ENCODE measurements at regions of chr10 and their contacts with region 1.

Region 1: GRCh38 chr10:117167789-117168674 is 29.3 kb upstream of the KCNK18 start:
- DNase-seq: peak; percentile 55 to 81
- H3K4me3 ChIP-seq: peak overlapping the region; percentile 21; the same call in 1 of the 2 replicates
- H3K4me3 Mint-ChIP-seq: peak overlapping the region; percentile 55
- H3K27ac Mint-ChIP-seq: no peak overlapping the region
- H3K4me1 ChIP-seq: peaks cover 15% of the 10 kb centered on the region
- H3K4me1 Mint-ChIP-seq: no peaks in the 10 kb centered on the region
- H3K27me3 ChIP-seq: peaks cover 2% of the 10 kb centered on the region
- H3K27me3 Mint-ChIP-seq: peaks cover 24% of the 10 kb centered on the region
- CTCF ChIP-seq: peak; percentile 76 to 94

Region 2: DNA sequence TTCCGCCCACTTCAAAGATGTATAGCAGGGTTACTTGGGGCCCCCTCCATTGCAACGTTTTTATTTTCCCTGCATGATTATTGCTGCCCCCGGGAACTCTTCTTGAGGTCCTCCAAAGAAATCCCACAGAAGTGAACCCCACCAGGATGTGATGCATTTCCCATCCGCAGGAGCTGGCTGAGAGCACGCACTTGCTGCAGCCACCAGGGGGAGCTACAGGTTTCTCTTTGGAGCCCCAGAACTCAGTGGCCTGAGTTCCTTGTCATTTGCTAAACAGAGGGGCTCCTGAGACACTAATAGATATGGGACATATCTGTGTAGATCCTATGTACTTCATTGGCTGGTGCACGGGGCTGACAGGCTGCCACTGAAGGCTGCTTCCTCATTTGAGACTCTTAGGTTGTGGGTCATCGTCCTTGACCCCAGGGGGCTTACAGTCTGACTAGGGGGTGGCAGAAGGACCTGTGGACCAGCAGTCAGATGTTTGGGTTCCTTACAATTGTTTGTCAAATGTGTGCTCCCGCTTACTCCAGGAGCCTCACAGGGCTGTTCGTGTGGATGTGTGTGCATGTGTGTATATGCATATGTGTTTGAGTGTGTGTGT is 371.0 kb before region 1 on chr10:
- CTCF ChIA-PET with region 1: interaction called, 50 read pairs
- POLR2A ChIA-PET with region 1: no interaction called
- intact Hi-C with region 1: loop called (anchors 1 kb)
- DNase-seq: peak; percentile 75 to 84
- H3K4me3 ChIP-seq: no peak overlapping the region
- H3K4me3 Mint-ChIP-seq: no peak overlapping the region
- H3K27ac Mint-ChIP-seq: no peak overlapping the region
- H3K4me1 ChIP-seq: no peaks in the 10 kb centered on the region
- H3K4me1 Mint-ChIP-seq: no peaks in the 10 kb centered on the region
- H3K27me3 ChIP-seq: no peaks in the 10 kb centered on the region
- H3K27me3 Mint-ChIP-seq: peaks cover 13% of the 10 kb centered on the region
- CTCF ChIP-seq: peak; percentile 87 to 97

Region 3: DNA sequence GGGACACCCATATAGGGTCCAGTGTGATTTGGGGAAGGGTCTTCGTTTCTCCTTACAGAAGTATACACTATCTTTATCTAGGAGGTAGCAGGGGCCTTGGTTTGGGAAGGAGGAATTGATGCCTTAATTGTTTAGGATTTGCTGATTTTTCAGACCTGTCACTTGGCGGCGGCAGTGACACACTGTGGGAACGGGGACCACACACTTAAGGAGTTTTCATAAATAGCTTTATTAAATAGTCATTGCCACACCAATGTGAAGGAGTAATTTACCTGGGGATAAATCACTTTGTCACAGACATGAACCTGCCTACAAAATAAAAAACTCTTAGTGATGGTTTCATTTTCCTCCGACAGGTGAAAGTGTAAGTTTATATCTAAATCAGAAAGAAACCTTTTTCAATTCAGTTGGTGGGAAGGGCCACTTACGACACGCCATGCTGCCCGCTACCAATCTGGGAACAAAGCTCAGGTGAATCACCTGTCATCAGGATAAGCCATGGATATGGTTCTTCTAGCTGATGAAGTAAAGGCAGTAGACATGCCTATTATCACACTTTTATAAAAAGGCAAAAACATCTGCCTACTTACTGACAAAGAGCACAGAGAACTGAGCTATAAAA is 331.0 kb before region 1 on chr10:
- CTCF ChIA-PET with region 1: interaction called, 18 read pairs
- POLR2A ChIA-PET with region 1: no interaction called
- intact Hi-C with region 1: loop called (anchors 1 kb)
- DNase-seq: no peak
- H3K4me3 ChIP-seq: no peak overlapping the region
- H3K4me3 Mint-ChIP-seq: no peak overlapping the region
- H3K27ac Mint-ChIP-seq: no peak overlapping the region
- H3K4me1 ChIP-seq: 0 out of 2 replicates have a peak, but pooled peaks cover 15% of the 10 kb centered on the region
- H3K4me1 Mint-ChIP-seq: no peaks in the 10 kb centered on the region
- H3K27me3 ChIP-seq: no peaks in the 10 kb centered on the region
- H3K27me3 Mint-ChIP-seq: no peaks in the 10 kb centered on the region
- CTCF ChIP-seq: peak in 1 of 2 experiments; percentile 26

Region 4: GRCh38 chr10:117005027-117005526 is 163.0 kb before region 1 on chr10 and contains the start of gene SHTN1:
- CTCF ChIA-PET with region 1: no interaction called
- POLR2A ChIA-PET with region 1: no interaction called
- intact Hi-C with region 1: loop called (anchors 10 kb)
- DNase-seq: peak; percentile 94 to 95
- H3K4me3 ChIP-seq: peak within 1 kb of the TSS; percentile 69
- H3K4me3 Mint-ChIP-seq: peak within 1 kb of the TSS; percentile 77
- H3K27ac Mint-ChIP-seq: peak within 1 kb of the TSS; percentile 93
- H3K4me1 ChIP-seq: peaks cover 17% of the 10 kb centered on the region
- H3K4me1 Mint-ChIP-seq: peaks cover 13% of the 10 kb centered on the region
- H3K27me3 ChIP-seq: no peaks in the 10 kb centered on the region
- H3K27me3 Mint-ChIP-seq: no peaks in the 10 kb centered on the region
- CTCF ChIP-seq: no peak
- total RNA-seq, gene SHTN1: 80.8 and 86.9 TPM in 2 replicates

Region 5: GRCh38 chr10:117112220-117112619 is 55.8 kb before region 1 on chr10:
- CTCF ChIA-PET with region 1: interaction called, 23 read pairs
- POLR2A ChIA-PET with region 1: no interaction called
- intact Hi-C with region 1: loop called (anchors 1 kb)
- DNase-seq: peak in 1 of 2 experiments; percentile 14
- H3K4me3 ChIP-seq: no peak overlapping the region
- H3K4me3 Mint-ChIP-seq: no peak overlapping the region
- H3K27ac Mint-ChIP-seq: no peak overlapping the region
- H3K4me1 ChIP-seq: no peaks in the 10 kb centered on the region
- H3K4me1 Mint-ChIP-seq: no peaks in the 10 kb centered on the region
- H3K27me3 ChIP-seq: no peaks in the 10 kb centered on the region
- H3K27me3 Mint-ChIP-seq: peaks cover 13% of the 10 kb centered on the region
- CTCF ChIP-seq: peak; percentile 38 to 76

Measured in Caco-2 (cell line).